ENCODE measurements at regions of chr10 and their contacts with region 1.

Region 1: DNA sequence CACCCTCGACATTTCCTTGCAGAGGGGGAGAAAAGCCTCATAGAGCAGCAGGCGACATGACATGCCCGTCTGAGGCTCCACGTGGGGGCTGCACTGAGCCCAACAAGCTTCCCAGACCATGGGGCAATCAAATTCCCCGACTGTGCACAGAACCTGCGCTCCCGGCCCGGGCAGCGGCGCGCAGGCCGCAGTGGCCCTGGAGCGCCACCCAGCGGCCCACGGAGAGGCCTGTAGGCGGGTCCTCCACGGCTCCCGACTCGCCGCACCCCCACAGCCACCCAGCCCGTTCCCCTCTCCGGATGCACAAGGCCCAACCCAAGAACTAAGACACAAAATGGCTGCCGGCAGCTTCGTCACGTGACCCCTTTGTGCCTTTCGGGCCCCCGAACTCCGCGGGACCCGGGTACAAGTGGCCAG is 816 bp downstream of the EPC1 start:
- DNase-seq: peak; percentile 97
- ATAC-seq: peak; percentile 97

Region 2: DNA sequence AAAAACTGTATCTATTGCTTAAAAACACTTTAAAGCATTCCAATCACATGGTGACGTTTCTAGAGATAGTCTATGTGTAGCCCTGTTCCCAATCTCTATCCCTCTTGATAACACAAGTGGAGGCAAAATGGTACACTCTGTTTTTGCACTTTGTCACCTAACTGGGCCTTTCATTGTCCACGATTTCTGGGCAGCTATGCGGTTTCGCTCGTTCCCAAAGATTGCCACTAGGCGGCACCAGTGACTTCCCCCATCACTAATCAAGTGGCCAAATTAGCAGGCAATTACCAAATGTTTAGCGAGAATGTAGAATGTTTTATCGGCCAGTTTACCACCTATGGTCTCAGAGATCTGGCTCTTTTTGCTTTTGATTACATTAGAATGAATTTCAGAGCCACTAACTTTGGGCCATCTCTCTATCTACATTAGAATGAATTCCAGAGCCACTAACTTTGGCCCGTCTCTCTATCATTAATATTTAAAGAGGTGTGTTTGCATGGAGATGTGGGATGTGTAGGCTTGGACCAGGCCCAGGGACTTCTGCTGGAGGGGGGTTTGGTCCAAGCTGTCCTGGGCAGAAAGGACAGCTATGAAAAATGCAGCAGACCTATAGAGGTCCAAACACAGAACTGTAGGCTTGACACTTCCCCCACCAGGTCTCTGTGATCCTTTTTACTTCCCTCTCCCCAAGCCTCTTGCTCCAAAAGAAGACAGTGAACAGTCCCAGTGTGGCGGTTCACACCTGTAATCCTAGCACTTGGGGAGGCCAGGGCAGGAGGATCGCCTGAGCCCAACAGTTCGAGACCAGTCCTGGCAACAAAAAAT is 89.3 kb before region 1 on chr10:
- intact Hi-C with region 1: loop called (anchors 5 kb)
- DNase-seq: peak; percentile 74
- ATAC-seq: peak; percentile 77

Region 3: GRCh38 chr10:33335801-33336581 is 989.8 kb after region 1 on chr10:
- intact Hi-C with region 1: no loop called
- DNase-seq: peak; percentile 88
- ATAC-seq: peak; percentile 62

Measured in left ventricle myocardium superior (tissue), 1 donor.